ENCODE measurements at regions of chr17 and their contacts with region 1.

Region 1: GRCh38 chr17:47663912-47664625 is 14.3 kb downstream of the KPNB1 start:
- DNase-seq: peak; percentile 50 to 68 (median 51)
- H3K4me3 ChIP-seq: no peak overlapping the region
- H3K4me3 Mint-ChIP-seq: peak overlapping the region in 1 of 7 donors; percentile 0
- H3K27ac ChIP-seq: no peak overlapping the region
- H3K27ac Mint-ChIP-seq: peak overlapping the region; percentile 18 to 90 (median 66)
- H3K4me1 ChIP-seq: peaks cover 13% of the 10 kb centered on the region
- H3K4me1 Mint-ChIP-seq: peaks cover 20 to 24% (median 21%) of the 10 kb centered on the region in 3 donors
- H3K27me3 ChIP-seq: no peaks in the 10 kb centered on the region
- H3K27me3 Mint-ChIP-seq: no peaks in the 10 kb centered on the region

Region 2: GRCh38 chr17:47423406-47424295 is 240.4 kb before region 1 on chr17:
- CTCF ChIA-PET with region 1: no interaction called
- POLR2A ChIA-PET with region 1: no interaction called
- DNase-seq: peak in 2 of 5 donors; percentile 0 to 2
- H3K4me3 ChIP-seq: no peak overlapping the region
- H3K4me3 Mint-ChIP-seq: peak overlapping the region in 6 of 7 donors; percentile 25 to 69 (median 64)
- H3K27ac ChIP-seq: no peak overlapping the region
- H3K27ac Mint-ChIP-seq: peak overlapping the region in 1 of 8 donors; percentile 72
- H3K4me1 ChIP-seq: no peaks in the 10 kb centered on the region
- H3K4me1 Mint-ChIP-seq: peaks cover 5 to 16% (median 12%) of the 10 kb centered on the region in 3 donors
- H3K27me3 ChIP-seq: no peaks in the 10 kb centered on the region
- H3K27me3 Mint-ChIP-seq: peaks cover 14 to 23% of the 10 kb centered on the region in 2 donors

Region 3: DNA sequence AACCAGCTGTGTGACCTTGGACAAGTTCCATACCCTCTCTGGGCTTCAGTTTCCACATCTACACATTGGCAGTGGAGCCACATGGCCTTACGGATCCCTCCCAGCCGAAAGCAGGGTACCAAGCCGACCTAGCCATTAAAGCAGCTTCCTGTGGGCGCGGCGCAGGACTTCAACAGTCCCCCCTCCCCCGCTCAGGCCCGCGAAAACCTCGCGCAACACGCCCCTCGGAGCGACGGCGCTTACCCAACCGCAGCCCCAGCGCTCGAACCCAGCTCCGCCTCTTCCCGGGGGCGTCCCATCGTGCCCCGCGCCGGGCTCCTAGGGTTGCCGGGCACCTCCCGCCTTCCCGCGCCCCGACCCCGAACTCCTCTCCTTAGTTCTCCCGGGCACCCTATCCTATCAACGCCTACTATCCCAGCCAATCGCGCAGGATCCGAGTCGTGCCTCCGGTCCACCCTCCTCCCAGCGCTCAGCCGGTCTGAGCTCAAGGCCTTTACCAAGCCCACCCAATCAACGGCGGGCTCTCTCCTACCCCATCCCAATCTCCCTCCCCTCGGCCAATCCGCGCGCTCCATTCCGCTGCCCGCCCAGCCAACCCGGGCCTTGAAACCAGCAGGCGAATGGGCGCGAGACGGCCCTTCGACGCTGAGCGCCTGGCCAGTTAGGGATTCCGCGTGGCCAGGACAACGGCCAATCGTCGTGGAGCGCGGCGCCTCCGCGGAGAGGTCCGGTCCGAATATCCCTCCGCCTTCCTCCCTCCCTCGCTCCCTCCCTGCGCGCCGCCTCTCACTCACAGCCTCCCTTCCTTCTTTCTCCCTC is 14.7 kb before region 1 on chr17 and contains the start of gene KPNB1:
- CTCF ChIA-PET with region 1: interaction called, 82 read pairs
- POLR2A ChIA-PET with region 1: interaction called, 33 read pairs
- DNase-seq: peak; percentile 98 to 99 (median 98)
- H3K4me3 ChIP-seq: peak within 1 kb of the TSS; percentile 84
- H3K4me3 Mint-ChIP-seq: peak within 1 kb of the TSS; percentile 91 to 100 (median 98)
- H3K27ac ChIP-seq: peak within 1 kb of the TSS; percentile 85
- H3K27ac Mint-ChIP-seq: peak within 1 kb of the TSS; percentile 92 to 100 (median 98)
- H3K4me1 ChIP-seq: peaks cover 49% of the 10 kb centered on the region
- H3K4me1 Mint-ChIP-seq: peaks cover 39 to 65% (median 53%) of the 10 kb centered on the region in 3 donors
- H3K27me3 ChIP-seq: no peaks in the 10 kb centered on the region
- H3K27me3 Mint-ChIP-seq: peaks cover 0 to 5% of the 10 kb centered on the region in 2 donors
- total RNA-seq, gene KPNB1: 907 to 915 TPM

Region 4: DNA sequence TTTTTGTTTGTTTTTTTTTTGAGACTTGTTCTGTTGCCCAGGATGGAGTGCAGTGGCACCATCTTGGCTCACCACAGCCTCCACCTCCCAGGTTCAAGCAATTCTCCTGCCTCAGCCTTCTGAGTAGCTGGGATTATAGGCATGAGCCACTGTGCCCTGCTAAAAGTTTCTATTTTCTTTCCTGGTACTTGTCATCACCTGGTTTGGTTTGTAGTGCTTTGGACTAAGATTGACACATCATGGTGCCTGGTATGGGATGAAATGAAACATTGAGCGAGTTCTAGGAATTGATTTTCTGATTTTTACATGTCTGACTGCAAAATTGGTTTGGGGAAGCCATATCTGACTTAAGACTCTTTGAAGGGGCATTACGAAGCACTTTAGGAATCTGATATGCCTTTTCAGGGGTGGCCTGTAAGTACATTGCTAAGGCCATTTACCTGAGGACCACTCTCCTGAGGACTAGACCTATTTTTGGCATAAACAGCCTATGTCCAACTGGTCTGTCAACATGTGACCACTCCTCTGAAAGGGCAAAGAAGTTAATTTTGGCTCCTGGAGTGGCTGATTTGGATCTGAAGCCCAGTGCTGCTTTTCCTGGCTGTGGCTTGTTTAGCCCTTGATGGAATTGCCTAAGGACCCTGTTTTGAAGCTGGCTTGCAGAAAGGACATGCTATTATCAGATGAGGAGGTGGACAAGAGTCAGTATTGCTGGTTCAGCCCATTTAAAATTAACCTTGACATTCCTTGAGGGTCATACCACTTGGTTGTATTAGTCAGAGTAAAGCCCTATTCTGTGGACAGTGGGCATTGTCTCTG is 11.5 kb after region 1 on chr17:
- CTCF ChIA-PET with region 1: interaction called, 30 read pairs
- POLR2A ChIA-PET with region 1: interaction called, 4 read pairs
- DNase-seq: no peak
- H3K4me3 ChIP-seq: no peak overlapping the region
- H3K4me3 Mint-ChIP-seq: no peak overlapping the region
- H3K27ac ChIP-seq: no peak overlapping the region
- H3K27ac Mint-ChIP-seq: peak overlapping the region in 7 of 8 donors; percentile 28 to 82 (median 66)
- H3K4me1 ChIP-seq: no peaks in the 10 kb centered on the region
- H3K4me1 Mint-ChIP-seq: peaks cover 2 to 27% (median 12%) of the 10 kb centered on the region in 3 donors
- H3K27me3 ChIP-seq: no peaks in the 10 kb centered on the region
- H3K27me3 Mint-ChIP-seq: no peaks in the 10 kb centered on the region

Region 5: GRCh38 chr17:47717261-47717697 is 53.2 kb after region 1 on chr17:
- CTCF ChIA-PET with region 1: interaction called, 21 read pairs
- POLR2A ChIA-PET with region 1: no interaction called
- DNase-seq: no peak
- H3K4me3 ChIP-seq: no peak overlapping the region
- H3K4me3 Mint-ChIP-seq: peak overlapping the region in 5 of 7 donors; percentile 57 to 78 (median 77)
- H3K27ac ChIP-seq: no peak overlapping the region
- H3K27ac Mint-ChIP-seq: peak overlapping the region in 7 of 8 donors; percentile 17 to 91 (median 54)
- H3K4me1 ChIP-seq: peaks cover 96% of the 10 kb centered on the region
- H3K4me1 Mint-ChIP-seq: peaks cover 93 to 97% (median 95%) of the 10 kb centered on the region in 3 donors
- H3K27me3 ChIP-seq: peaks cover 3% of the 10 kb centered on the region
- H3K27me3 Mint-ChIP-seq: no peaks in the 10 kb centered on the region

Region 6: GRCh38 chr17:47763913-47764582 is 100.0 kb after region 1 on chr17:
- CTCF ChIA-PET with region 1: no interaction called
- POLR2A ChIA-PET with region 1: no interaction called
- DNase-seq: no peak
- H3K4me3 ChIP-seq: no peak overlapping the region
- H3K4me3 Mint-ChIP-seq: peak overlapping the region in 1 of 7 donors; percentile 51
- H3K27ac ChIP-seq: no peak overlapping the region
- H3K27ac Mint-ChIP-seq: peak overlapping the region in 4 of 8 donors; percentile 3 to 58 (median 22)
- H3K4me1 ChIP-seq: peaks cover 16% of the 10 kb centered on the region
- H3K4me1 Mint-ChIP-seq: peaks cover 19 to 23% (median 21%) of the 10 kb centered on the region in 3 donors
- H3K27me3 ChIP-seq: no peaks in the 10 kb centered on the region
- H3K27me3 Mint-ChIP-seq: no peaks in the 10 kb centered on the region

Measured in CD8-positive, alpha-beta memory T cell (primary cell).